ENCODE measurements at regions of chr13 and their contacts with region 1.

Region 1: GRCh38 chr13:52405767-52406494 is at the start of gene THSD1:
- DNase-seq: peak; percentile 53
- H3K4me3 ChIP-seq: peak within 1 kb of the TSS; percentile 78 to 97 (median 90)
- H3K27ac ChIP-seq: peak within 1 kb of the TSS; percentile 70
- H3K4me1 ChIP-seq: peaks cover 16% of the 10 kb centered on the region
- H3K27me3 ChIP-seq: no peaks in the 10 kb centered on the region
- CTCF ChIP-seq: no peak
- total RNA-seq, gene THSD1: 27.2 to 44.5 TPM

Region 2: GRCh38 chr13:52428295-52428694 is 22.4 kb after region 1 on chr13:
- CTCF ChIA-PET with region 1: interaction called, 18 read pairs
- dilution Hi-C with region 1: no loop called
- in situ Hi-C with region 1: no loop called
- intact Hi-C with region 1: no loop called
- DNase-seq: peak; percentile 44
- H3K4me3 ChIP-seq: no peak overlapping the region
- H3K27ac ChIP-seq: no peak overlapping the region
- H3K4me1 ChIP-seq: peaks cover 5% of the 10 kb centered on the region
- H3K27me3 ChIP-seq: no peaks in the 10 kb centered on the region
- CTCF ChIP-seq: no peak

Region 3: DNA sequence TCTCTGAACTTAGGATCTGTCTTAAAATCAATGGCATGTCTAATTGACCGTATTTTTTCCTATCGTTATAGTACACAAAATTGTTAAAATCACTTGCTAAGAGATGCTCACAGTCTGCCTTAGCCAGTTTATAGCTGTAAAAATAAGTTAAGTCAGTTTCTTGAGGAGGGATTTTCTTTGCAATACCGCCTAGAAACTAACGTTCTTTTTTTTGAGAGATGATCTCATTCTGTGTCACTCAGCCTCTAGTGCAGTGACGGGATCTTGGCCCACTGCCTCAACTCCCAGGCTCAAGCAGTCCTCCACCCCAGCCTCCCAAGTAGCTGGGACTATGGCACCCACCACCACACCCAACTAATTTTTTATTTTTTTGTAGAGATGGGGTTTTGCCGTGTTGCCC is 53.7 kb after region 1 on chr13:
- CTCF ChIA-PET with region 1: no interaction called
- dilution Hi-C with region 1: no loop called
- in situ Hi-C with region 1: no loop called
- intact Hi-C with region 1: no loop called
- DNase-seq: peak; percentile 66
- H3K4me3 ChIP-seq: no peak overlapping the region
- H3K27ac ChIP-seq: peak overlapping the region; percentile 2
- H3K4me1 ChIP-seq: peaks cover 22% of the 10 kb centered on the region
- H3K27me3 ChIP-seq: no peaks in the 10 kb centered on the region
- CTCF ChIP-seq: no peak

Measured in mammary epithelial cell (primary cell).